ENCODE measurements at regions of chr19 and their contacts with region 1.

Region 1: GRCh38 chr19:49391581-49392399 is 3.7 kb downstream of the KASH5 start:
- DNase-seq: peak; percentile 88
- CTCF ChIP-seq: peak; percentile 89

Region 2: GRCh38 chr19:49378512-49378911 is 13.3 kb before region 1 on chr19:
- CTCF ChIA-PET with region 1: interaction called, 33 read pairs
- POLR2A ChIA-PET with region 1: interaction called, 4 read pairs
- DNase-seq: no peak
- CTCF ChIP-seq: no peak

Region 3: GRCh38 chr19:49409441-49410029 is 17.7 kb after region 1 on chr19:
- CTCF ChIA-PET with region 1: interaction called, 26 read pairs
- POLR2A ChIA-PET with region 1: interaction called, 3 read pairs
- DNase-seq: no peak
- CTCF ChIP-seq: no peak

Region 4: DNA sequence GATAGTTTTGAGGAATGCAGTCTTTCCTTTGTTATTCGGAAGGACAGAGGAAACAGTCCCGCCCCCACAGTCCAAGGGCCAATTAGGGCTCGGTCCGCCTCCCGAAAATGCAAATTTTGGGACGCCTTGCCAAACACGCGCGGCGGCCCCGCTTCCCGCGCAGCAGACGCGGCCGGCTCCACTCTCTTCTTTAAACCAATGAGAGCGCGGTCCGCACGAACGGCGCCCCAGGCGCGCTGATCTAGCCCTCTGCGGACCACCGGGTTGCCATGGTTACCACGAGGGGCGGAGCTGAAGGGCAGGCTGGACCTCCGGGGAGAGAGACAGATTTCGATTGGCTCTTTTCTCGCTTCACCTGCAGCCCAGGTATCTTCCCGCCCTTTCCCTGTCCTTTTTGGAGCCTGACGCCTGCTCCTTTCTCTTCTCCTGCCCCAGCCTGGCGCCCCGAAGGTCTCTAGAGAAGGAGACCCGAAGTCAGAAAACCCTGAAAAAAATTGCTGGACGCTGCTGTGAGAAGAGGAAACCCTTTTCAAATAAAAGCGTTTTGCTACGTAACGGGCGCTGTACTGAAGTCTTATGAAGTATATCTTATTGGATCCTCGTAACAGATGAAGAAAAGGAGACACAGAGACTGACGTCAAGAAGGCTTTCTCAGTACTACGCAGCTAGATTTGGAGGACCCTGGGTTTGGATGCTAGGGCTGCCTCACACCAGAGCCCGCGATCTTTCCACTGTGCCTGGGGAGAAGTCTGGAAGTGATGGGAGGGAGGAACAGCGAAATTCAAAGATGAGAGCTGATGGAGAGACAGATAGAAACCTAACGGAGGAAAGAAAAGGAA is 29.5 kb after region 1 on chr19:
- CTCF ChIA-PET with region 1: interaction called, 21 read pairs
- POLR2A ChIA-PET with region 1: no interaction called
- DNase-seq: no peak
- CTCF ChIP-seq: no peak

Region 5: GRCh38 chr19:49436369-49437017 is 44.7 kb after region 1 on chr19:
- CTCF ChIA-PET with region 1: interaction called, 23 read pairs
- POLR2A ChIA-PET with region 1: no interaction called
- DNase-seq: peak; percentile 49
- CTCF ChIP-seq: no peak

Region 6: GRCh38 chr19:49443366-49444099 is 51.7 kb after region 1 on chr19:
- CTCF ChIA-PET with region 1: interaction called, 23 read pairs
- POLR2A ChIA-PET with region 1: no interaction called
- DNase-seq: peak; percentile 92
- CTCF ChIP-seq: peak; percentile 99